ENCODE measurements at regions of chr15 and their contacts with region 1.

Region 1: GRCh38 chr15:56285981-56286612 is 42.4 kb upstream of the RFX7 start:
- DNase-seq: peak; percentile 12
- H3K4me3 ChIP-seq: no peak overlapping the region
- H3K27ac ChIP-seq: no peak overlapping the region
- H3K4me1 ChIP-seq: no peaks in the 10 kb centered on the region
- H3K27me3 ChIP-seq: no peaks in the 10 kb centered on the region
- CTCF ChIP-seq: peak in 1 of 5 experiments; percentile 17
- EP300 ChIP-seq: no peak
- POLR2A ChIP-seq: no peak

Region 2: GRCh38 chr15:56568466-56569167 is 282.5 kb after region 1 on chr15:
- in situ Hi-C with region 1: loop called in 1 of 4 experiments (anchors 25 kb)
- intact Hi-C with region 1: no loop called
- DNase-seq: no peak
- H3K4me3 ChIP-seq: no peak overlapping the region
- H3K27ac ChIP-seq: no peak overlapping the region
- H3K4me1 ChIP-seq: no peaks in the 10 kb centered on the region
- H3K27me3 ChIP-seq: no peaks in the 10 kb centered on the region
- CTCF ChIP-seq: no peak
- EP300 ChIP-seq: no peak
- POLR2A ChIP-seq: no peak

Measured in transverse colon (tissue), 4 donors.